ENCODE measurements at regions of chr2 and their contacts with region 1.

Region 1: GRCh38 chr2:112601751-112602150 is 17.3 kb downstream of the CHCHD5 start:
- DNase-seq: no peak
- ATAC-seq: no peak
- H3K4me3 ChIP-seq: no peak overlapping the region
- H3K4me3 Mint-ChIP-seq: no peak overlapping the region
- H3K27ac ChIP-seq: no peak overlapping the region
- H3K27ac Mint-ChIP-seq: no peak overlapping the region
- H3K4me1 ChIP-seq: peaks cover 4% of the 10 kb centered on the region
- H3K4me1 Mint-ChIP-seq: peaks cover 5% of the 10 kb centered on the region
- H3K27me3 ChIP-seq: no peaks in the 10 kb centered on the region
- H3K27me3 Mint-ChIP-seq: no peaks in the 10 kb centered on the region
- CTCF ChIP-seq: no peak

Region 2: GRCh38 chr2:112591378-112591777 is 10.4 kb before region 1 on chr2:
- CTCF ChIA-PET with region 1: no interaction called
- POLR2A ChIA-PET with region 1: no interaction called
- intact Hi-C with region 1: no loop called
- DNase-seq: no peak
- ATAC-seq: no peak
- H3K4me3 ChIP-seq: no peak overlapping the region
- H3K4me3 Mint-ChIP-seq: no peak overlapping the region
- H3K27ac ChIP-seq: no peak overlapping the region
- H3K27ac Mint-ChIP-seq: no peak overlapping the region
- H3K4me1 ChIP-seq: peaks cover 3% of the 10 kb centered on the region
- H3K4me1 Mint-ChIP-seq: peaks cover 9% of the 10 kb centered on the region
- H3K27me3 ChIP-seq: no peaks in the 10 kb centered on the region
- H3K27me3 Mint-ChIP-seq: no peaks in the 10 kb centered on the region
- CTCF ChIP-seq: no peak

Region 3: GRCh38 chr2:112626604-112627059 is 24.9 kb after region 1 on chr2:
- CTCF ChIA-PET with region 1: interaction called, 14 read pairs
- POLR2A ChIA-PET with region 1: interaction called, 4 read pairs
- intact Hi-C with region 1: loop called in 1 of 2 experiments (anchors 2 kb)
- DNase-seq: peak; percentile 43 to 83 (median 60)
- ATAC-seq: peak; percentile 38
- H3K4me3 ChIP-seq: peak overlapping the region; percentile 41
- H3K4me3 Mint-ChIP-seq: peak overlapping the region; percentile 74
- H3K27ac ChIP-seq: peak overlapping the region in 1 of 2 donors; percentile 33
- H3K27ac Mint-ChIP-seq: peak overlapping the region; percentile 90
- H3K4me1 ChIP-seq: peaks cover 72% of the 10 kb centered on the region
- H3K4me1 Mint-ChIP-seq: peaks cover 69% of the 10 kb centered on the region
- H3K27me3 ChIP-seq: no peaks in the 10 kb centered on the region
- H3K27me3 Mint-ChIP-seq: no peaks in the 10 kb centered on the region
- CTCF ChIP-seq: peak; percentile 95

Region 4: DNA sequence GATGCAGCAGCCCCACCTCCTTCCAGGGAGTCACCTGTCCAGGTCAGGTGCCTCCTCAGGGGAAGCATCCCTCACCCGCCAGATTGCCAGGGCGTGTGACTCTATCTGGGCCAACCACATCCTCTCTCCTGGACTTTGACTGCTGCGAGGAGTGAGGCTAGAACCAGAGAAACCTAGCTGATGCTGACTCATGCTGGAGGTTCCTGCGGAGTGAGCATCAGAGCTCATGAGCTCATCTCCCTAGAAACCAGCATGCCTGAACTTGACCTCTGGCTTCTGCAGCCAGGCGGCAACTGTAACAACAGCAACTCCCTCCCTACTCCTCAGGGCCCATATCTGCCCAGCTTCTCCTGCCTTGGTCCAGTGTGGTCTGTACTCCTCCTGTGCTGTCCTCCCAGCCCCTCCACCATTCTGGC is 90.8 kb after region 1 on chr2:
- CTCF ChIA-PET with region 1: interaction called, 10 read pairs
- POLR2A ChIA-PET with region 1: interaction called, 4 read pairs
- intact Hi-C with region 1: loop called (anchors 1 kb)
- DNase-seq: peak in 12 of 14 experiments; percentile 12 to 85 (median 35)
- ATAC-seq: peak; percentile 69
- H3K4me3 ChIP-seq: no peak overlapping the region
- H3K4me3 Mint-ChIP-seq: peak overlapping the region; percentile 14
- H3K27ac ChIP-seq: peak overlapping the region in 1 of 2 donors; percentile 48
- H3K27ac Mint-ChIP-seq: peak overlapping the region; percentile 51
- H3K4me1 ChIP-seq: peaks cover 31% of the 10 kb centered on the region
- H3K4me1 Mint-ChIP-seq: peaks cover 22% of the 10 kb centered on the region
- H3K27me3 ChIP-seq: peaks cover 0 to 3% of the 10 kb centered on the region in 2 experiments
- H3K27me3 Mint-ChIP-seq: no peaks in the 10 kb centered on the region
- CTCF ChIP-seq: no peak

Region 5: GRCh38 chr2:112884869-112885505 is 283.2 kb after region 1 on chr2:
- CTCF ChIA-PET with region 1: no interaction called
- POLR2A ChIA-PET with region 1: no interaction called
- intact Hi-C with region 1: no loop called
- DNase-seq: peak; percentile 39 to 78 (median 58)
- ATAC-seq: peak; percentile 78
- H3K4me3 ChIP-seq: no peak overlapping the region
- H3K4me3 Mint-ChIP-seq: no peak overlapping the region
- H3K27ac ChIP-seq: no peak overlapping the region
- H3K27ac Mint-ChIP-seq: no peak overlapping the region
- H3K4me1 ChIP-seq: peaks cover 8% of the 10 kb centered on the region
- H3K4me1 Mint-ChIP-seq: peaks cover 6% of the 10 kb centered on the region
- H3K27me3 ChIP-seq: no peaks in the 10 kb centered on the region
- H3K27me3 Mint-ChIP-seq: no peaks in the 10 kb centered on the region
- CTCF ChIP-seq: peak; percentile 95

Region 6: GRCh38 chr2:112958428-112959108 is 356.8 kb after region 1 on chr2:
- CTCF ChIA-PET with region 1: no interaction called
- POLR2A ChIA-PET with region 1: no interaction called
- intact Hi-C with region 1: loop called in 1 of 2 experiments (anchors 1 kb)
- DNase-seq: peak in 8 of 14 experiments; percentile 8 to 77 (median 34)
- ATAC-seq: peak; percentile 77
- H3K4me3 ChIP-seq: no peak overlapping the region
- H3K4me3 Mint-ChIP-seq: no peak overlapping the region
- H3K27ac ChIP-seq: no peak overlapping the region
- H3K27ac Mint-ChIP-seq: no peak overlapping the region
- H3K4me1 ChIP-seq: no peaks in the 10 kb centered on the region
- H3K4me1 Mint-ChIP-seq: no peaks in the 10 kb centered on the region
- H3K27me3 ChIP-seq: peaks cover 0 to 3% of the 10 kb centered on the region in 2 experiments
- H3K27me3 Mint-ChIP-seq: no peaks in the 10 kb centered on the region
- CTCF ChIP-seq: peak; percentile 93

Region 7: GRCh38 chr2:112993831-112994230 is 392.1 kb after region 1 on chr2:
- CTCF ChIA-PET with region 1: no interaction called
- POLR2A ChIA-PET with region 1: no interaction called
- intact Hi-C with region 1: no loop called
- DNase-seq: no peak
- ATAC-seq: no peak
- H3K4me3 ChIP-seq: no peak overlapping the region
- H3K4me3 Mint-ChIP-seq: no peak overlapping the region
- H3K27ac ChIP-seq: no peak overlapping the region
- H3K27ac Mint-ChIP-seq: peak overlapping the region; percentile 91
- H3K4me1 ChIP-seq: peaks cover 27% of the 10 kb centered on the region
- H3K4me1 Mint-ChIP-seq: peaks cover 49% of the 10 kb centered on the region
- H3K27me3 ChIP-seq: no peaks in the 10 kb centered on the region
- H3K27me3 Mint-ChIP-seq: no peaks in the 10 kb centered on the region
- CTCF ChIP-seq: no peak